Activated B cell treated with CpG ODN at 0.5 μM for 24 hours (primary cell): ENCODE measurements at regions of chr3 and their contacts with region 1.

Region 1: DNA sequence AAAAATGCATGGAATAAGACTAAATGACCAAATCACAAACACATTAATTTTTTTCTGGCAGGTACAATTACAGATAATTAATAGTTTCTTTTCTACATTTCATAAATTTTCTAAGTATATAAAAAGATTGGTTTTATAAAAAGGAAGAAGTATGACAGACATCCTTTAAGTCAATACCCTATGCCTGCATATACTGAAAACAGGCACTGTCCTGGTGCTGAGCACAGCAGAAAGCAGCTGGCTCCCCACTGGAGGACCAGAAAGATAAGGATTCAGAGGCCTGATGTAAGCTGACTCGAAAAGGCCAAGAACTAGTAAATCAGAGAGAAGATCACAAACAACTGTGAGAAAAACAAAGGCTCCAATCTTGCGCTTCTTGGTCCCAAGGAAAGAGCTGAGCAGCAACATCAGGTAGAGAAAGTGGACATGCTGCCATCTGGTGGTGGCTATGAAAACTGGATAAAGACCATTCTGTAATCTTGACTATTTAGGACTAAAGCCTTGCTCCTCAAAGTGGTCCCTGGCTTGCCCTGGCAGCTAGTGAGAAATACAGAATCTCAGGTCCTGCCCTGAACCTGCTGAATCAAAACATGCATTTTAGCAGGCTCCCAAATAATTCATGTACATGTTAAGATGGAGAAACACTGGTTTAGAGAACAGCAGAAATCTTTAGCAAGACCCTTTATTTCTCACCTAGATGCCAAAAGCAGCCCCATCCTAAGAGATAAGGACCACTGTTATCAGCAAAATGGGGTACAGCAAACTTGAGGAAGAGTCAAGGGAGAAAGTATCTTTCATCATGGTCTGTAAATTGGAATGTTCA is 76.0 kb downstream of the TRANK1 start:
- DNase-seq: no peak
- ATAC-seq: peak; percentile 88
- H3K4me3 Mint-ChIP-seq: no peak overlapping the region
- H3K27ac Mint-ChIP-seq: peak overlapping the region; percentile 59
- H3K4me1 Mint-ChIP-seq: peaks cover 23% of the 10 kb centered on the region
- H3K27me3 Mint-ChIP-seq: no peaks in the 10 kb centered on the region
- CTCF ChIP-seq: peak; percentile 87

Region 2: GRCh38 chr3:35965908-35966307 is 902.9 kb before region 1 on chr3:
- CTCF ChIA-PET with region 1: no interaction called
- POLR2A ChIA-PET with region 1: no interaction called
- intact Hi-C with region 1: loop called (anchors 10 kb)
- DNase-seq: no peak
- ATAC-seq: no peak
- H3K4me3 Mint-ChIP-seq: no peak overlapping the region
- H3K27ac Mint-ChIP-seq: no peak overlapping the region
- H3K4me1 Mint-ChIP-seq: peaks cover 8% of the 10 kb centered on the region
- H3K27me3 Mint-ChIP-seq: no peaks in the 10 kb centered on the region
- CTCF ChIP-seq: no peak

Region 3: GRCh38 chr3:36729204-36730056 is 139.4 kb before region 1 on chr3:
- CTCF ChIA-PET with region 1: no interaction called
- POLR2A ChIA-PET with region 1: no interaction called
- intact Hi-C with region 1: loop called (anchors 2 kb)
- DNase-seq: no peak
- ATAC-seq: no peak
- H3K4me3 Mint-ChIP-seq: no peak overlapping the region
- H3K27ac Mint-ChIP-seq: no peak overlapping the region
- H3K4me1 Mint-ChIP-seq: no peaks in the 10 kb centered on the region
- H3K27me3 Mint-ChIP-seq: peaks cover 6% of the 10 kb centered on the region
- CTCF ChIP-seq: no peak

Region 4: GRCh38 chr3:36786921-36787890 is 81.6 kb before region 1 on chr3:
- CTCF ChIA-PET with region 1: no interaction called
- POLR2A ChIA-PET with region 1: no interaction called
- intact Hi-C with region 1: no loop called
- DNase-seq: no peak
- ATAC-seq: no peak
- H3K4me3 Mint-ChIP-seq: no peak overlapping the region
- H3K27ac Mint-ChIP-seq: no peak overlapping the region
- H3K4me1 Mint-ChIP-seq: no peaks in the 10 kb centered on the region
- H3K27me3 Mint-ChIP-seq: peaks cover 10% of the 10 kb centered on the region
- CTCF ChIP-seq: no peak

Region 5: DNA sequence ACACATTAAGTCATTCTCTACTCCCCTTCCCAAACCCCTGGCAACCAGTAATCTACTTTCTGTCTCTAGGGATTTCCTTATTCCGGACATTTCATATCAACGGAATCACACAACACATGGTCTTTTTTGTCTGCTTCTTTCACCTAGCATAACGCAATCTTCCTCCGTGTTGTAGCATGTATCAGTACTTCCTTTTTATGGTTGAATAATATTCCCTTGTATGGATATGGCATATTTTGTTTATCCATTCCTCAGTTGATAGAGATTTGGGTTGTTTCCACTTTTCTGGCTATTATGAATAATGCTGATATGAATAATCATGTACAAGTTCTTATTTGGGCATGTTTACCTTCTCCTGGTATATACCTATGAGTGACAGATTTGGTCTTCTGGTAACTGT is 12.9 kb after region 1 on chr3:
- CTCF ChIA-PET with region 1: interaction called, 4 read pairs
- POLR2A ChIA-PET with region 1: no interaction called
- intact Hi-C with region 1: loop called (anchors 2 kb)
- DNase-seq: no peak
- ATAC-seq: no peak
- H3K4me3 Mint-ChIP-seq: no peak overlapping the region
- H3K27ac Mint-ChIP-seq: peak overlapping the region; percentile 3
- H3K4me1 Mint-ChIP-seq: peaks cover 43% of the 10 kb centered on the region
- H3K27me3 Mint-ChIP-seq: no peaks in the 10 kb centered on the region
- CTCF ChIP-seq: no peak

Region 6: GRCh38 chr3:36988356-36988755 is 119.5 kb after region 1 on chr3:
- CTCF ChIA-PET with region 1: interaction called, 10 read pairs
- POLR2A ChIA-PET with region 1: interaction called, 4 read pairs
- intact Hi-C with region 1: no loop called
- DNase-seq: no peak
- ATAC-seq: no peak
- H3K4me3 Mint-ChIP-seq: peak overlapping the region; percentile 76
- H3K27ac Mint-ChIP-seq: peak overlapping the region; percentile 65
- H3K4me1 Mint-ChIP-seq: peaks cover 37% of the 10 kb centered on the region
- H3K27me3 Mint-ChIP-seq: no peaks in the 10 kb centered on the region
- CTCF ChIP-seq: no peak

Region 7: GRCh38 chr3:37210230-37210629 is 341.4 kb after region 1 on chr3:
- CTCF ChIA-PET with region 1: no interaction called
- POLR2A ChIA-PET with region 1: no interaction called
- intact Hi-C with region 1: loop called (anchors 2 kb)
- DNase-seq: no peak
- ATAC-seq: no peak
- H3K4me3 Mint-ChIP-seq: no peak overlapping the region
- H3K27ac Mint-ChIP-seq: no peak overlapping the region
- H3K4me1 Mint-ChIP-seq: no peaks in the 10 kb centered on the region
- H3K27me3 Mint-ChIP-seq: no peaks in the 10 kb centered on the region
- CTCF ChIP-seq: no peak